ENCODE measurements at regions of chr16 and their contacts with region 1.

Region 1: DNA sequence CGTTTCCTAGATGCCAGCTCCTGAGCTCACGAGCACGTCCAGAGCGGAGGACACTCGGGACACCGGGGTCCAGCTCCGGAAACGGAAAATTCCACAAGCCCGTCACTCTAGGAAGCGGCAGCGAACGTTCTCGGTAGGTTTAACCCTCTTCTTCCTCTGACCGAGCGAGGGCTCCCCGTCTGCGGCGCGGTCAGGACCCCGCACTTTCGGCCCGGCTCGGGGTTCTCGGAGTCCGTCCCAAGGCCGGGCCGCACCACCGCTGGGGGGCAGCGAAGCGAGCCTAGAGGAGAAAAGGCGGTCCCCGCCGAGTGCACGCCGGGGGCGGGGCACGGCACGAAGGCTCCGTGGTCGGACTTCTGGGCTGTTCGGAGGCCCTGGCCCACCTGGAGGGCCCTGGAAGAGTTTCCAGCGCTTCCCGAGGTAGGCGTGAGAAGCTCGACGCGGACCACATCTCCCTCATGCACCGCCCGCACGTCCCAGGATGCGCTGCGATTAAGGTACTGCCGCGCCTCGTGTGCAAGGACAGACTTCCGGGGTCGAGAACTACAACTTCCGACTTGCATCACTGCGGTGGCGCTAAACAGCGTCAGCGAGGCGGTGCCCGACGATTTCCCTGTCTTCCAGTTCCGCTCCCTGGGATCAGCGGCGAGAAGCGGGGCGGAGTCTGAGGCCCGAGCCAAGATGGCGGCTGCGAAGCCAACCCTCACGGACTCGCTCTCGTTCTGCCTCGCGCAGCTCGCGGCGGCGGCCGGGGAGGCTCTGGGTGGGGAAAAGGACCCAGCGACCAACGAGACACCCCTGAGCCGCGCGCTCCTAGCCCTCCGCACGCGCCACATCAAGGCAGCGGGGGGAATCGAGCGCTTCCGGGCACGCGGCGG is at the start of gene ARMC5:
- DNase-seq: peak; percentile 96
- H3K4me3 ChIP-seq: peak within 1 kb of the TSS; percentile 82
- H3K27ac ChIP-seq: peak within 1 kb of the TSS; percentile 100
- H3K27me3 ChIP-seq: no peaks in the 10 kb centered on the region
- CTCF ChIP-seq: peak; percentile 70

Region 2: GRCh38 chr16:30941600-30942425 is 517.3 kb before region 1 on chr16:
- in situ Hi-C with region 1: loop called (anchors 25 kb)
- DNase-seq: peak; percentile 70
- H3K4me3 ChIP-seq: no peak overlapping the region
- H3K27ac ChIP-seq: no peak overlapping the region
- H3K27me3 ChIP-seq: no peaks in the 10 kb centered on the region
- CTCF ChIP-seq: peak; percentile 95

Region 3: GRCh38 chr16:31179747-31180459 is 279.2 kb before region 1 on chr16 and contains the start of gene FUS:
- in situ Hi-C with region 1: loop called (anchors 25 kb)
- DNase-seq: peak; percentile 56
- H3K4me3 ChIP-seq: peak within 1 kb of the TSS; percentile 97
- H3K27ac ChIP-seq: peak within 1 kb of the TSS; percentile 99
- H3K27me3 ChIP-seq: no peaks in the 10 kb centered on the region
- CTCF ChIP-seq: no peak

Measured in brain microvascular endothelial cell (primary cell).